ENCODE measurements at regions of chr10 and their contacts with region 1.

Region 1: GRCh38 chr10:6088721-6089390 is at the start of gene RBM17:
- DNase-seq: peak; percentile 84
- ATAC-seq: peak; percentile 86
- H3K4me3 ChIP-seq: peak within 1 kb of the TSS; percentile 88
- H3K27ac ChIP-seq: no peak within 1 kb of the TSS
- H3K4me1 ChIP-seq: peaks cover 5% of the 10 kb centered on the region
- H3K27me3 ChIP-seq: no peaks in the 10 kb centered on the region
- CTCF ChIP-seq: peak; percentile 92
- total RNA-seq, gene RBM17: 28.4 and 42.0 TPM in 2 replicates

Region 2: DNA sequence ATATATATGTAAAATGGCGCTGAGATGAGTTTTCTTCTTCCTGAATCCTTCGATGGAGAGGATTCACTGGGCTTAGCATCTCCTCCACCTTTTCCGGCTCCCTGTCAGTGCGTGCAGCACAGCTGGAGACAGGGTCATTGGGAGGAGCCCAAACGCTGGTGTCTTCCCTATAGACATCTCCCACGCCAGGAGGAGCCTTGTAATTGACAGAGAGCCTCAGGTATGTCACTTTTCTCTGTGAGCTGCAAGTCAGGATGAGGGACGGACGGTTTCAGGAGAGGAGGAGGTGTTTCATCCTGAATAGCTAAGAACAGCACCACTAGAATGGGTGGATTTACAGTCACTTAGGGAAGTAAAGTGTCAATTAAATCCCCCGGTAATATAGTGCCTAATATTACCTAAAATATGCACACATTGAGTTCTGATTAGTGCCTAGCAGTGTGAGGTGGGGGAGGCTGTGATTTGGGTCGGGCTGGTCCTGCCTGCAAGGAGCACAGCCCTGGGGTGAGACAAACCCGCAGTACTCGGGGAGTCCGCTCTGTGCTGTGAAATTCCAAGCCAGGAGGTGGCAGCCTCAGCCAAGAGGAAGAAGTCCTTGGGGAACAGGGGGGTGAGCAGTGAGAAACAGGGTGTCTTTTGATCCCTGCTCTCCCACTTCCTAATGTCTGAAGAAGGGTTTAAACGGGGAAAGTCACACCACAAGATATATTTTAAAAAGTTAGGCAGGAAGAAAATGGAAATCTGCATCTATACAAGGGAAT is 139.7 kb before region 1 on chr10:
- CTCF ChIA-PET with region 1: no interaction called
- POLR2A ChIA-PET with region 1: no interaction called
- intact Hi-C with region 1: loop called (anchors 5 kb)
- DNase-seq: peak; percentile 54
- ATAC-seq: peak; percentile 42
- H3K4me3 ChIP-seq: no peak overlapping the region
- H3K27ac ChIP-seq: no peak overlapping the region
- H3K4me1 ChIP-seq: peaks cover 30% of the 10 kb centered on the region
- H3K27me3 ChIP-seq: no peaks in the 10 kb centered on the region
- CTCF ChIP-seq: peak; percentile 61

Region 3: GRCh38 chr10:6014241-6014761 is 74.6 kb before region 1 on chr10:
- CTCF ChIA-PET with region 1: interaction called, 3 read pairs
- POLR2A ChIA-PET with region 1: no interaction called
- intact Hi-C with region 1: loop called (anchors 10 kb)
- DNase-seq: peak; percentile 59
- ATAC-seq: peak; percentile 81
- H3K4me3 ChIP-seq: peak overlapping the region; percentile 40
- H3K27ac ChIP-seq: no peak overlapping the region
- H3K4me1 ChIP-seq: no peaks in the 10 kb centered on the region
- H3K27me3 ChIP-seq: no peaks in the 10 kb centered on the region
- CTCF ChIP-seq: peak; percentile 67

Region 4: DNA sequence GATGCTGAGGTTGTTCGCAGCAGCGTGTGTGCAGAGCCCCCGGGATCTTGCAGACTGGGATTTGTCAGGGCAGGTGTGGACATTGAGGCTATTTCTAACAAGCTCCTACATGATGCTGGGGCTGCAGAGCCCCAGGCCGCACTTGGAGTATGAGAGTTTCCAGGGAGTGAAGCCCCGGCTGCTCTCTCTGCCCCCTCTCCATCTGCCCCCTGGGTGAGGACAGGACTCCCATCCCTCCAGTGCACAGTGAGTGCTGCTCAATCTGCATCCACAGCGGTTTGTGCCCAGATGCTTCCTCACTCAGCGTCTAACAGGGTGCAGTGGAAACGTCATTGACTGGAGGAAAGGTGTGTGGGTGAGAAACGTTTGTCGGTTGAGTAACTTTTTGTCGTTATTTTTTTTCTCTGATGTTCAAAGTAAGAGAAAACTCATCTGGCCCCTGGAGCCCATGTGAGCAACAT is 52.0 kb before region 1 on chr10:
- CTCF ChIA-PET with region 1: no interaction called
- POLR2A ChIA-PET with region 1: no interaction called
- intact Hi-C with region 1: no loop called
- DNase-seq: no peak
- ATAC-seq: no peak
- H3K4me3 ChIP-seq: no peak overlapping the region
- H3K27ac ChIP-seq: no peak overlapping the region
- H3K4me1 ChIP-seq: no peaks in the 10 kb centered on the region
- H3K27me3 ChIP-seq: peaks cover 28% of the 10 kb centered on the region
- CTCF ChIP-seq: no peak

Region 5: DNA sequence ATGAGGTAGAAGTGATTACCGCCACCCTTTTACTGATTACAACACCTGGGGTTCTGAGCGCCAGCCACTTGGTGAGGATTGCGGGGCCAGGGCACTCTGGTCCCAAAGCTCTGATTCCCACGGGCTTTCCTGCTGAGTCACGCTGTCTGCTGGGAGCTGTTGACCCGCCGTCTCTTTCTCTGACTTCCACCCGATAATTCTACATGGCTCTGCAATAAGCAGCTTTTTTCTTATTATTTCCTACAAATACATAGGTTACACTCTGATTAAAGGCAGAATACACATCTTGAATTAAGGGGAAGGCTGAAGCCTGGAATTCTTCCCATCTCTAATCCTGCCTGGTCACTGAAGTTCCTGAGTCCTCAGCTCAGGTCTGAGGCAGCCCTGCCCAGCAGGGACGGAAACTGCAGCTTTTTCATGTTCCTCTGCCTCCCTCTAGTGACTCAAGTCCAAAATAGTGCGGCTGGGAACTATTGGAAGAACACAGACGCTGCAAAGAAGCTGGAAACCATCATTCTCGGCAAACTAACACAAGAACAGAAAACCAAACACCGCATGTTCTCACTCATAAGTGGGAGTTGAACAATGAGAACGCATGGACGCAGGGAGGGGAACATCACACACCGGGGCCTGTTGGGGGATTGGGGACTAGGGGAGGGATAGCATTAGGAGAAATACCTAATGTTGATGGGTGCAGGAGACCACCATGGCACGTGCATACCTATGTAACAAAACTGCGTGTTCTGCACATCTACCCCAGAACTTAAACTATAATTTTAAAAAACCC is 312.9 kb after region 1 on chr10:
- CTCF ChIA-PET with region 1: no interaction called
- POLR2A ChIA-PET with region 1: no interaction called
- intact Hi-C with region 1: loop called (anchors 5 kb)
- DNase-seq: peak; percentile 81
- ATAC-seq: peak; percentile 94
- H3K4me3 ChIP-seq: peak overlapping the region; percentile 68
- H3K27ac ChIP-seq: peak overlapping the region; percentile 61
- H3K4me1 ChIP-seq: peaks cover 5% of the 10 kb centered on the region
- H3K27me3 ChIP-seq: no peaks in the 10 kb centered on the region
- CTCF ChIP-seq: peak; percentile 62